ENCODE measurements at regions of chr19 and their contacts with region 1.

Region 1: GRCh38 chr19:48492925-48493717 is 18.5 kb downstream of the LMTK3 start:
- DNase-seq: peak; percentile 48
- ATAC-seq: peak; percentile 85
- H3K4me3 ChIP-seq: peak overlapping the region; percentile 57; the same call in 1 of the 2 replicates
- H3K27ac ChIP-seq: no peak overlapping the region
- H3K4me1 ChIP-seq: peaks cover 20% of the 10 kb centered on the region
- H3K27me3 ChIP-seq: peaks cover 1 to 3% of the 10 kb centered on the region in 2 experiments; a peak in 2 of 4 replicates
- CTCF ChIP-seq: no peak
- EP300 ChIP-seq: no peak
- POLR2A ChIP-seq: peak; percentile 68
- RAD21 ChIP-seq: no peak

Region 2: GRCh38 chr19:48363810-48364563 is 129.1 kb before region 1 on chr19 and contains the starts of genes SYNGR4 and TMEM143:
- CTCF ChIA-PET with region 1: no interaction called
- POLR2A ChIA-PET with region 1: interaction called, 3 read pairs
- RAD21 ChIA-PET with region 1: no interaction called
- SMC1A ChIA-PET with region 1: interaction called, 4 read pairs
- in situ Hi-C with region 1: no loop called
- intact Hi-C with region 1: loop called (anchors 5 kb)
- DNase-seq: peak; percentile 99
- ATAC-seq: peak; percentile 90
- H3K4me3 ChIP-seq: peak within 1 kb of the TSS; percentile 82
- H3K27ac ChIP-seq: peak within 1 kb of the TSS; percentile 99
- H3K4me1 ChIP-seq: peaks cover 9% of the 10 kb centered on the region; the same call in 1 of the 2 replicates
- H3K27me3 ChIP-seq: no peaks in the 10 kb centered on the region
- CTCF ChIP-seq: no peak
- EP300 ChIP-seq: peak in 1 of 2 experiments; percentile 33; a peak in 1 of 4 replicates
- POLR2A ChIP-seq: peak; percentile 70
- RAD21 ChIP-seq: no peak
- polyA plus RNA-seq, gene SYNGR4: not detected
- polyA plus RNA-seq, gene TMEM143: 1.5 to 2.4 TPM

Region 3: DNA sequence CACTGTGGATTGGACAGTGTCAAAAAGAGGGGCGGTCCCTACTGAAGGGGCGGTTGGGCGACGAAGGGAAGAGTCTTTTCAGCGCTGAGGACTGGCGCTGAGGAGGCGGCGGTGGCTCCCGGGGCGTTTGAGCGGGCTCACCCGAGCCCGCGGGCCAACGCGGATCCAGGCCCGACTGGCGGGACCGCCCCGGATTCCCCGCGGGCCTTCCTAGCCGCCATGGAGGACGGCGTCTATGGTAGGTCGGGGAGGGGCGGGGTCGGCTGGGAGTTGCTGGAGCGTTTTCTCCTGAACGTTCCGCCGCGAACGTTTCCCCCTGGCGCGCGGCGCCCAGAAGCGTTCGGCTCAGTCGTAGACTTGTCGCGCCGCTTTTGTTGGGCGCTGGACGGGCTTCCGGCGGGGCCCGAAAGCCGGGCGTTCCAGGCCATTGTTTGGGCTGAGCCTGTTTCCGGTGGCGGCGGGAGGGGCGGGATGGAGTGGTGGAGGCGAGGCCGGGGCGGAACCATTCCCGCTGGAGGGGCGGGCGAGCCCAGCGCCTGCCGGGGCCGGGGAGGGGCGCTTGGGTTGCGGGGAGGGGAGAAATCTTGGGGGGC is 23.7 kb before region 1 on chr19 and contains the start of gene CYTH2:
- CTCF ChIA-PET with region 1: interaction called, 27 read pairs
- POLR2A ChIA-PET with region 1: interaction called, 5 read pairs
- RAD21 ChIA-PET with region 1: interaction called, 7 read pairs
- SMC1A ChIA-PET with region 1: interaction called, 3 read pairs
- in situ Hi-C with region 1: no loop called
- intact Hi-C with region 1: no loop called
- DNase-seq: no peak
- ATAC-seq: peak; percentile 78
- H3K4me3 ChIP-seq: peak within 1 kb of the TSS; percentile 82
- H3K27ac ChIP-seq: peak within 1 kb of the TSS; percentile 78
- H3K4me1 ChIP-seq: peaks cover 8% of the 10 kb centered on the region; the same call in 1 of the 2 replicates
- H3K27me3 ChIP-seq: no peaks in the 10 kb centered on the region
- CTCF ChIP-seq: no peak
- EP300 ChIP-seq: no peak
- POLR2A ChIP-seq: peak; percentile 95
- RAD21 ChIP-seq: no peak
- polyA plus RNA-seq, gene CYTH2: 1.3 to 1.6 TPM

Region 4: GRCh38 chr19:48506138-48506733 is 13.1 kb after region 1 on chr19:
- CTCF ChIA-PET with region 1: interaction called, 14 read pairs
- POLR2A ChIA-PET with region 1: no interaction called
- RAD21 ChIA-PET with region 1: interaction called, 3 read pairs
- SMC1A ChIA-PET with region 1: interaction called, 3 read pairs
- in situ Hi-C with region 1: no loop called
- intact Hi-C with region 1: no loop called
- DNase-seq: no peak
- ATAC-seq: peak; percentile 21
- H3K4me3 ChIP-seq: no peak overlapping the region
- H3K27ac ChIP-seq: no peak overlapping the region
- H3K4me1 ChIP-seq: peaks cover under 1% of the 10 kb centered on the region; the same call in 1 of the 2 replicates
- H3K27me3 ChIP-seq: no peaks in the 10 kb centered on the region; a peak in 1 of 4 replicates
- CTCF ChIP-seq: peak; percentile 39 to 57 (median 54)
- EP300 ChIP-seq: no peak
- POLR2A ChIP-seq: no peak
- RAD21 ChIP-seq: peak; percentile 83

Measured in GM12878 (cell line).